GM10248 (cell line): ENCODE measurements at regions of chr12 and their contacts with region 1.

Region 1: DNA sequence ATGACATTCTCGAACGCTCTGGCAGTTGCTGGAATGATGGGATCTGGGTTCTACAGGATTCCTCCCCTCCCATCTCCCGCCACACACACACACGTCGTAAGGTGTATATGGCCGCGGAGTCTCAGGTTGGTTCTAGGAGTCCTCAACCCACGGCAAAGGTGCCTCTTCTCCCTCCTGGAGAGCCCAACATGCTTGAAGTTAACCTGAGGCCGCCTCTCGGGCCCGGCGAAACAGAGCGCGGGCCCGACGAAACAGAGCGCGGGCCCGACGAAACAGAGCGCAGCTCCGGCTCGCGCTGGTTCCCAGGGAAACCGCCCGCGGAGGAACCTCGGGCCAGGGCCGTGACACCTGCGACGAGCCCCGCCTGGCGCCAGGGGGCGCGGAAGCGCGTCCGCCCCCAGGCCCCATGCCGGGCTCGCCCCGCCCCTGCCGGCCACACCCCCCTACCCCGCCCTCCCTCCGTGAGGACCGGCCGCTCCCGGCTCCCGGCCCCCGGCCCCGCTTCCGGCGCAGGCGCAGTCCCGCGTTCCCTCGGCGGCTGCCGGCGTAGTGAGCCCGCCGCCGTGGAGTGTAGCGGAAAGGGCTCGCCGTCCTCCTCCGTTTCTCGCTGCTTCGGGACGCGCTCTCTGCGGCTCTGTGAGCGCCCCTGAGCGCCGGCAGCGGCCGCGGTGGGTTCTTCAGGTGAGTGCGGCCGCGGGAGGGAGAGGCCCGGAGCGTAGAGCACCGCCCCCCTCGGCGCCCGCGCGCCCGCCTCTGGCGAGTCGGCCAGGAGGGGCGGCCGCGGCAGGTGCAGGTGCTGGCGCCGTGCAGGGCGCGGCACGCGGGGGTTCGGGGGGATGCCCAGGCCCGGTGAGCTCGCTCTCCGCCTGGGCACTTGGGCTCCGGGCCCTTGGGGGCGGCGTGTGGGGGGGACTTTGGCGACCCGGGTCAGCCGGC is at the start of gene RAB3IP:
- DNase-seq: peak; percentile 99
- CTCF ChIP-seq: peak; percentile 78

Region 2: DNA sequence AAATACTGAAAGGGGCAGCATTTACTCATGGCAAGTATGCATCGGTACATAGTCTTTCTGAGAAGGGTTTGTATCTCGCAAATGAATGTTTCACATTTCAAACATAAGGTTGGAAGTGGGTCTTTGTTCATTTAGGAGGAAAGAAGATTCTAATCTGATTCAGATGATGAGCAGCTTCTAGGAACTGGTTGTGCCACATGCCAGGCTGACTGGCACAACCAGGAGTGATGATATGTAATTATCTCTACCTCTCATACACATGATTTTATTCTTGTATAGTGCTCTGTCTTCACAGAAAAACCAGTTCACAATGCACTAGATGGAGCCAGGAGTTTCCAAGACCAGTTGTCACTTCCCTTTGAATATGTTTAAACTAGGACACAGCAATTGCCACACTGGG is 25.8 kb before region 1 on chr12:
- CTCF ChIA-PET with region 1: no interaction called
- POLR2A ChIA-PET with region 1: no interaction called
- DNase-seq: no peak
- CTCF ChIP-seq: no peak

Region 3: DNA sequence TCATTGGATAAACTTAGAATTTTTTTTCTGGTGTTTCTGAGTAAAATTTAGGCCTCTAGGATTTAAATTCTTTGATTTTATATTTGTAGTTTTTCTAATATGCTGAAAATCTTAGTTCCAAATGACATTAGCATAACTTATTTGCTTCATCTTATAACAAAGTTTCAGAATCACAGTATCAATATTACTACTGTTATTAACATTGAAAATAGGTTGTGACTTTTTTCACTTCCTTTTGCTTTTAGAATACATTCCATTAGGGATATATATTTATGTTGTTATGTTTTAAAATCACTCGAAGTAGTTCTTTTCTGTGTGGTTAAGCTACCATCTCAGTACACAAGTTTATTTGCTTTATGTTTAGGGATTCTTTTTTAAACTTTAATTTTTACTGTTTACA is 12.9 kb after region 1 on chr12:
- CTCF ChIA-PET with region 1: interaction called, 16 read pairs
- POLR2A ChIA-PET with region 1: no interaction called
- DNase-seq: no peak
- CTCF ChIP-seq: no peak